CD4-positive, alpha-beta T cell (primary cell): ENCODE measurements at regions of chr2 and their contacts with region 1.

Region 1: GRCh38 chr2:226799181-226799975 is at the start of gene IRS1:
- DNase-seq: peak; percentile 34 to 86 (median 54)
- ATAC-seq: peak; percentile 66
- H3K4me3 ChIP-seq: peak within 1 kb of the TSS; percentile 74
- H3K4me3 Mint-ChIP-seq: peak within 1 kb of the TSS; percentile 92
- H3K27ac ChIP-seq: peak within 1 kb of the TSS in 1 of 2 donors; percentile 40
- H3K27ac Mint-ChIP-seq: peak within 1 kb of the TSS; percentile 71
- H3K4me1 ChIP-seq: peaks cover 56% of the 10 kb centered on the region
- H3K4me1 Mint-ChIP-seq: peaks cover 24% of the 10 kb centered on the region
- H3K27me3 ChIP-seq: peaks cover 0 to 10% of the 10 kb centered on the region in 2 experiments
- H3K27me3 Mint-ChIP-seq: peaks cover 6% of the 10 kb centered on the region
- CTCF ChIP-seq: no peak
- total RNA-seq, gene IRS1: 2.9 TPM

Region 2: DNA sequence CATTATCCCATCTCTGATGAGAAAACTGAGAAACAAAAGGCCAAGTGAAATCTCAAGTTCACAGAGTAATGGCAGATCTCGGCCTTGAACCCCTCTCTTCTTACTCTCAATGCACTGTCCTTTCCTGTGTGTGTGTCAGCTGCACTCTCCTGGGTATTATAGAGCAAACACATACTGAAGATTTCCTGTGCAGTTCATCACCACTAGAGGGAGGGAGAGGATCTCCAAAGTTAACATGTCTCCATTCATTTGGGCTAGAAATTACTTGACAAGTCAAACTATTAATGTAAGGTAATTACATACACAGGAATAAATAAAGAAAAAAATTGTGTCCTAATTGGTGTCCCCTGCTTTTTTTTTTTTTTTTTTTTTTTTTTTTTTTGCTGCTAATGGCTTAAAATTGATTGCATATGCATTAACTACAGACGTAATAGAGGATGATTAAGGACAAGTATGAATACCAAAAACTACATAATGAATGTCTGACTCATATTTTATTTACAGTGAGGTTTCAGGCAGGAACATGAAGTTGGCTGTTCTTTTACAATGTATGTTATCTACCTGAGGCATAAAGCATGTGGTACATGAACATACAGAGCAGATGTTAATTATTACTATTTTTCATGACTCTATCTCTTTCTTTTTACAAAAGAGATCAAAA is 1130.6 kb before region 1 on chr2:
- CTCF ChIA-PET with region 1: interaction called, 5 read pairs
- POLR2A ChIA-PET with region 1: no interaction called
- intact Hi-C with region 1: loop called (anchors 1 to 2 kb)
- DNase-seq: peak in 5 of 14 experiments; percentile 3 to 68 (median 51)
- ATAC-seq: peak; percentile 81
- H3K4me3 ChIP-seq: no peak overlapping the region
- H3K4me3 Mint-ChIP-seq: no peak overlapping the region
- H3K27ac ChIP-seq: no peak overlapping the region
- H3K27ac Mint-ChIP-seq: no peak overlapping the region
- H3K4me1 ChIP-seq: no peaks in the 10 kb centered on the region
- H3K4me1 Mint-ChIP-seq: no peaks in the 10 kb centered on the region
- H3K27me3 ChIP-seq: no peaks in the 10 kb centered on the region
- H3K27me3 Mint-ChIP-seq: peaks cover 16% of the 10 kb centered on the region
- CTCF ChIP-seq: peak; percentile 71

Region 3: DNA sequence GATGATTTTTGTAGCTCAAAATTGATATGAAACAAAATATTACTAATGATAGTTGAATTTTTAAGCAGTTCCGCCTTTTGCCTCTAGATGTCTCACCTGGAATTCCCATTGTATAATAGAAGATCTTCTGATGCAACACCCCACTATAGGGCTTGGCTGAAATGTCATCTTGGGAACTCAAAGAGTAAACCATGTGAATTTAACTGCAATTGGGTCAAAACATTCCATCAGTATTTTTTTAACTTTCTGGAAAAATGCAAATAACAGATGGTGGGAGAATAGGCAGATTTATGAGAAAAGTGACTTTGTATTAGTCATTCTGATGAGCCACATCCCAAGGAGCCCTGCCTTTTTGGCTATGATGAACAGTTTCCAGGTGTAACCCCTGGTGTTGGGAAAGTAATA is 909.9 kb before region 1 on chr2:
- CTCF ChIA-PET with region 1: interaction called, 4 read pairs
- POLR2A ChIA-PET with region 1: no interaction called
- intact Hi-C with region 1: loop called in 1 of 2 experiments (anchors 1 kb)
- DNase-seq: peak in 3 of 14 experiments; percentile 29 to 31 (median 29)
- ATAC-seq: no peak
- H3K4me3 ChIP-seq: no peak overlapping the region
- H3K4me3 Mint-ChIP-seq: no peak overlapping the region
- H3K27ac ChIP-seq: no peak overlapping the region
- H3K27ac Mint-ChIP-seq: no peak overlapping the region
- H3K4me1 ChIP-seq: no peaks in the 10 kb centered on the region
- H3K4me1 Mint-ChIP-seq: no peaks in the 10 kb centered on the region
- H3K27me3 ChIP-seq: peaks cover 0 to 3% of the 10 kb centered on the region in 2 experiments
- H3K27me3 Mint-ChIP-seq: peaks cover 8% of the 10 kb centered on the region
- CTCF ChIP-seq: peak; percentile 70

Region 4: GRCh38 chr2:226215902-226216503 is 583.4 kb before region 1 on chr2:
- CTCF ChIA-PET with region 1: interaction called, 6 read pairs
- POLR2A ChIA-PET with region 1: interaction called, 3 read pairs
- intact Hi-C with region 1: loop called (anchors 1 to 2 kb)
- DNase-seq: peak; percentile 5 to 75 (median 44)
- ATAC-seq: peak; percentile 62
- H3K4me3 ChIP-seq: no peak overlapping the region
- H3K4me3 Mint-ChIP-seq: no peak overlapping the region
- H3K27ac ChIP-seq: no peak overlapping the region
- H3K27ac Mint-ChIP-seq: no peak overlapping the region
- H3K4me1 ChIP-seq: no peaks in the 10 kb centered on the region
- H3K4me1 Mint-ChIP-seq: no peaks in the 10 kb centered on the region
- H3K27me3 ChIP-seq: no peaks in the 10 kb centered on the region
- H3K27me3 Mint-ChIP-seq: peaks cover 5% of the 10 kb centered on the region
- CTCF ChIP-seq: peak; percentile 31

Region 5: GRCh38 chr2:226772389-226773179 is 26.8 kb before region 1 on chr2:
- CTCF ChIA-PET with region 1: interaction called, 7 read pairs
- POLR2A ChIA-PET with region 1: interaction called, 19 read pairs
- intact Hi-C with region 1: no loop called
- DNase-seq: peak in 3 of 14 experiments; percentile 26 to 67 (median 42)
- ATAC-seq: peak; percentile 68
- H3K4me3 ChIP-seq: peak overlapping the region; percentile 3
- H3K4me3 Mint-ChIP-seq: peak overlapping the region; percentile 57
- H3K27ac ChIP-seq: no peak overlapping the region
- H3K27ac Mint-ChIP-seq: no peak overlapping the region
- H3K4me1 ChIP-seq: peaks cover 5% of the 10 kb centered on the region
- H3K4me1 Mint-ChIP-seq: peaks cover 28% of the 10 kb centered on the region
- H3K27me3 ChIP-seq: no peaks in the 10 kb centered on the region
- H3K27me3 Mint-ChIP-seq: no peaks in the 10 kb centered on the region
- CTCF ChIP-seq: no peak

Region 6: GRCh38 chr2:227238238-227239237 is 439.2 kb after region 1 on chr2:
- CTCF ChIA-PET with region 1: no interaction called
- POLR2A ChIA-PET with region 1: no interaction called
- intact Hi-C with region 1: loop called in 1 of 2 experiments (anchors 5 kb)
- DNase-seq: peak; percentile 31 to 69 (median 47)
- ATAC-seq: no peak
- H3K4me3 ChIP-seq: no peak overlapping the region
- H3K4me3 Mint-ChIP-seq: no peak overlapping the region
- H3K27ac ChIP-seq: no peak overlapping the region
- H3K27ac Mint-ChIP-seq: no peak overlapping the region
- H3K4me1 ChIP-seq: no peaks in the 10 kb centered on the region
- H3K4me1 Mint-ChIP-seq: no peaks in the 10 kb centered on the region
- H3K27me3 ChIP-seq: no peaks in the 10 kb centered on the region
- H3K27me3 Mint-ChIP-seq: peaks cover 19% of the 10 kb centered on the region
- CTCF ChIP-seq: peak; percentile 98